ENCODE measurements at regions of chr14 and their contacts with region 1.

Region 1: DNA sequence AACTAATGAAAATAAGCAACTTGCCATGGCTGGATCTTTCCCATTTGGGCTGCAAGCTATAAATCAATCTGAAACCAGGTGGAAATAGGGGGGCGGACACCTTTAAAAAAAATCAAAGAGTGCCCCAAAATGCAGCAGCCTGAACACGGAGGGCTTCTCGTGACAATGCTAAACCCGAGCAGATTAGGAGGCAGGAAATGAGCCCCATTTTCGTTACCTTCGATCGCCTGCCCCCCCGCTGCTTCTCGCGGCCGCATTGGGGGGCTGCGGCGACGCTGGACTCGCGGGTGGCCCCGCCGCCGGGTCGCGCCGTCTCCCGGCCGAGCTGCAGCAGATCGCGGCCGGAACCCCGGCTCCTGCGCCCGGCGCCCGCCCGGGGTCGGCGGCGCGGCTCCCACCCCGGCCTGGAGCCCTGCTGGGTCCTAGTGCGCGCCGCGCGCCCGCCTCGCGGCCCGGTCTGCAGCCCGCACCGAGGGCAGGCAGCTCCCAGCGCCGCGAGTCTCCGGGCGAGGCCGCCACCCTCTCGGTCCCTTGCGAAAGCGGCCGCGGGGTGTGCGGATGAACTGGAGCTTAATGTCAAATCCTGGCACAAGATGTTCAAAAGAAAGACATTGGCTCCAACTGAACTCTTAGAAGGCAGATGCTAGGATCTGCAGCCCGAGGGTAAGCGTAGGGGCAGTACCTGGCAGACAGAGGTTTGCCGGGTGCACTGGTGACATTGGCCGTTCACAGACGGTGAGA is 201.9 kb upstream of the FOXN3 start:
- DNase-seq: peak; percentile 30 to 81 (median 55)
- ATAC-seq: peak; percentile 66 to 76 (median 70)
- H3K4me3 ChIP-seq: peak overlapping the region; percentile 59 to 94
- H3K4me3 Mint-ChIP-seq: peak overlapping the region; percentile 90 to 93 (median 92)
- H3K27ac ChIP-seq: peak overlapping the region; percentile 85
- H3K27ac Mint-ChIP-seq: peak overlapping the region; percentile 96 to 97
- H3K4me1 ChIP-seq: peaks cover 37 to 47% of the 10 kb centered on the region in 2 experiments
- H3K4me1 Mint-ChIP-seq: peaks cover 64 to 70% (median 69%) of the 10 kb centered on the region in 3 donors
- H3K27me3 ChIP-seq: no peaks in the 10 kb centered on the region
- H3K27me3 Mint-ChIP-seq: no peaks in the 10 kb centered on the region

Region 2: DNA sequence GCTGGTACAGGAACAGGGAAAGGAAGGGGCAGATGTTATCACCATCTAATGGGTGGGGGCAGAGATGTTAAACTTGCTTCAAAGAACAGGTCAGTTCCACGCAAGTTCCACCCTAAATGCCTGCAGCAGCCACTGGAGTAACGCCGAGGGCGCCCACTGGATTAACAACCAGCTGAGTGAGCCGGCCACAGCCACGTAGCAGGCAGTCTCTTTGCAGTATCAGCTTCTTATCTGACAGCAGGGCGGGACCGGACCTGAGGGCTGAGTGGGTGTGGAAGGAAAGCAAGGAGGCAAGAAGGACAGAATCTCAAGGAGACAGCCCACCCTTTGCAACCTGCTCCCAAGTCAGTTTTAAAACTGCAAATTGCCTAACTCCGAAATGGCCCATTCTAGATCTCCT is 163.6 kb before region 1 on chr14:
- CTCF ChIA-PET with region 1: interaction called in 1 of 2 experiments, 11 read pairs
- POLR2A ChIA-PET with region 1: no interaction called
- DNase-seq: no peak
- ATAC-seq: no peak
- H3K4me3 ChIP-seq: no peak overlapping the region
- H3K4me3 Mint-ChIP-seq: no peak overlapping the region
- H3K27ac ChIP-seq: no peak overlapping the region
- H3K27ac Mint-ChIP-seq: no peak overlapping the region
- H3K4me1 ChIP-seq: no peaks in the 10 kb centered on the region
- H3K4me1 Mint-ChIP-seq: peaks cover 32 to 44% (median 41%) of the 10 kb centered on the region in 3 donors
- H3K27me3 ChIP-seq: no peaks in the 10 kb centered on the region
- H3K27me3 Mint-ChIP-seq: no peaks in the 10 kb centered on the region

Region 3: DNA sequence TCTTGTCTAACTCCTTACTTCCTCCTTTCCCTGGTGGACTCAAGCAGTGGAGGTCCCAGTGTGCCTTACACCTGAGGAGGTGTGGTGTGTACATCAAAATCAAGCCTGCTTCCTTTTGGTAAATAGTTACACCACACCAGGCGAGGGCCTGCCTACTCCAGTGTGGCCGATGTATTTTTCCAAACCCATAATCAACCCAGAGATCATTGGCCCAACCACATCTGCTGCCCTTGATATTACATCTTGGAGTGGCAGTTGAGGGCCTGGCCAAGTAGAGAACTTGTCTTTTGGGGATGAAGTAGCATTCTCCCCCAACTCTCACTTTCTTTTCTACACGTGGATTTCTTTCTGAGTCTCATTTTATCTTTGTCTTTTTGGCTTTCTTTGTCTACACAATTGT is 148.2 kb after region 1 on chr14:
- CTCF ChIA-PET with region 1: interaction called, 10 to 11 read pairs
- POLR2A ChIA-PET with region 1: no interaction called
- DNase-seq: no peak
- ATAC-seq: no peak
- H3K4me3 ChIP-seq: no peak overlapping the region
- H3K4me3 Mint-ChIP-seq: peak overlapping the region in 1 of 3 donors; percentile 52
- H3K27ac ChIP-seq: no peak overlapping the region
- H3K27ac Mint-ChIP-seq: peak overlapping the region; percentile 74 to 81
- H3K4me1 ChIP-seq: peaks cover 11 to 29% of the 10 kb centered on the region in 2 experiments
- H3K4me1 Mint-ChIP-seq: peaks cover 33 to 48% (median 33%) of the 10 kb centered on the region in 3 donors
- H3K27me3 ChIP-seq: no peaks in the 10 kb centered on the region
- H3K27me3 Mint-ChIP-seq: no peaks in the 10 kb centered on the region

Measured in T-cell (primary cell).